Left colon (tissue), 2 donors: ENCODE measurements at regions of chr11 and their contacts with region 1.

Region 1: DNA sequence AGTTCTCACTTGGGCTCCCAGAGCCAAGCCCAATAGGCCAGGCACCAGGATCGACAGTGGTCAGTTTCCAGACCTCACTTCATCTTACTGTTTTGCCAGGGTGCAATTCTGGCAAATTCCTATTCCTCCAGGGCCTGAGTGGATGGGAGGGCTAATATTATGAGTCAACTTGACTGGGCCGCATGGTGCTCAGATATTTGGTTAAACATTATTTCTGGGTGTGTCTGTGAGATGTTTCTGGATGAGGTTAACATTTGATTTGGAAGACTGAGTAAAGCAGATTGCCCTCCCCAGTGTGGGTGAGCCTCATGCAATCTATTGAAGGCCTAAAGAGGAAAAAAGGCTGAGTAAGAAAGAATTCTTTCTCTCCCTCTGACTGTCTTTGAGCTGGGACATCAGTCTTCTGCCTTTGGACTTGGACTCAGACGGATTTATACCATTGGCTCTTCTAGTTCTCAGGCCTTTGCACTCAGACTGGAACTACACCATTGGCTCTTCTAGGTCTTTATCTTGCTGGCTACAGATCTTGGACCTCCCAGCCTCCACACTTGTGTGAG is 132.9 kb upstream of the ZBED5 start:
- DNase-seq: no peak
- ATAC-seq: peak; percentile 32

Region 2: DNA sequence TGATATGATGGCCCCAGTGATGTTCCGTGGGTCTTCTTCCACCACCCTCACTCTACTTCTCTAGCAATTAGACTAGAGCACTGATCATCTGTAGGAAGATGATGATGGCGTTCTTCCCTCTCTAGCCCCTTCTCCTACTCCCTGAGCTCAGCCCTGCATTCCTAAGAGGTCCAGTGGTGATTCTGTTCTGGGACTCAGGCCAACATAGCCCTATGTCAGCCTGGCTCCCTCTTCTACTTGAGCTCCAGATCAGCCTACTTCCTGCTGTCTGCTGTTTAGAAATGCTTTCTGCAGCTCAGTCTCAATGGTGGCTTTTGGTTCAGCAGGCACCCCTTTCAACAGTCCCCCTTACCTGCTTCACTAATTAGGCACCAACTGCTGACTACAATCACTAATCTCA is 46.7 kb before region 1 on chr11:
- intact Hi-C with region 1: loop called in 1 of 2 experiments (anchors 10 kb)
- DNase-seq: no peak
- ATAC-seq: no peak

Region 3: DNA sequence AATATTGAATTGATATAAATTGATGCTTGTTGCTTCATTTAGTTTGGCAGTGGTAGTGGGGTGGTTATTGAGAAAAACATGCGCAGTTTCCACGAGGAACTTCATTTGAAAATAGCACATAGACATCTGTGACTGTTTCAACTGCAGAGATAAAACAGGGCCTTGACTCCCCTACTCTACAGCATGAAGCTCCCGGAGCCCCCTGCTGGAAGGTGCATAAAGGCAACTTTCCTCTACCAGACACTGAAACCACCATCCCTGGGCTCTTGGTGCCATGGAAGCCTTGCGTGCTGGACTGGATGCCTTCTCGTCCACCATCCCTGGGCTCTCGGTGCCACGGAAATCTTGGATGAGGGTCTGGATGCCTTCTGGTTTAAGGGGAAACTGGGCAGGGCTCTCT is 166.5 kb after region 1 on chr11:
- intact Hi-C with region 1: no loop called
- DNase-seq: no peak
- ATAC-seq: no peak